PC-3 (cell line): ENCODE measurements at regions of chr19 and their contacts with region 1.

Region 1: DNA sequence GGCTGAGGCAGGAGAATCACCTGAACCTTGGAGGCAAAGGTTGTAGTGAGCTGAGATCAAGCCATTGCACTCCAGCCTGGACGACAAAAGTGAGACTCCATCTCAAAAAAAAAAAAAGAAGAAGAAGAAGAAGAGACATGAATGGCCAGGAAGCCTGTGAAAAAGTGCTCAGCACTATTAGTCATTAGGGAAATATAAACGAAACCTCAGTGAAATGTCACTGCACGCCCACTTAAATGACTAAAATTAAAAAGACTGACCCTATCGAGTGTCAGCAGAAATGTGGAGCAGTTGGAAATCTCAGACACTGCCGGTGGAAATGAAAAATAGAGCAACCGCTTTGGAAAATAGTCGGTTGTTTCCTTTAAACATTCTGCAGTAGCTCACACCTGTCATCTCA is 5.5 kb upstream of the TYROBP start:
- DNase-seq: peak; percentile 27
- ATAC-seq: no peak
- H3K4me3 ChIP-seq: no peak overlapping the region
- H3K27ac ChIP-seq: no peak overlapping the region
- H3K4me1 ChIP-seq: no peaks in the 10 kb centered on the region
- H3K27me3 ChIP-seq: no peaks in the 10 kb centered on the region
- CTCF ChIP-seq: no peak

Region 2: DNA sequence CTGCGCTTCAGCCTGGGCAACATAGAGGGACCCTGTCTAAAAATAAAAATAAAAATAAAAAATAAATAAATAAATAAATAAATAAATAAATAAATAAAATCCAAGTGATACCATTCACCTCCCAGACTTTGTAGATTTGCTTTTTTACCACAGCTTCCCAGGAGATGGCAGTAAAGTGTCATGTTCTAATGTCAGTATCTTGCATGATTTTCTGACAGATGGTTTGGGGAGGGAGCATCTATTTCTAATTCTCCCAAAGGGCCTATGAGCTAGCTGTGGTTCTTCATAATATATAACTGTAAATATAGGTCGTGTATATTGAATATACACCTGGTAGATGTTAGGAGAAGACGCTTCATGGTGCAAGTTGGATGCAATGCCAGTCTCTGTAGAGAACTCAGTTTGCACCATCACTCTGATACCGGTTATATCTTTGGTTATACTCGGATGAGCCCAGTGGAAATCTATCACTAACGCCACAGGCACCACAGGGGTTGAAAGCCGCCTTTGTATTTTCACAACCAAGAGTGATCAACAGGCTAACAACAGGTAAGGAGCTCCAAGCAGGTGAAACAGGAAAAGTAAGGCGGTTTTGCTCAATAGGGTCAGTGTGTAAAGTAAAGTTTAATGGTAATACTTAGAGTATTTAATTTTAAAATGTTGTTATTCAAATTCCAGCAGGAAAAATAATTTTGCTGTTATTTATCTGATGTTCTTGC is 31.3 kb before region 1 on chr19:
- CTCF ChIA-PET with region 1: no interaction called
- POLR2A ChIA-PET with region 1: no interaction called
- intact Hi-C with region 1: loop called (anchors 1 kb)
- DNase-seq: peak; percentile 71
- ATAC-seq: peak; percentile 49
- H3K4me3 ChIP-seq: no peak overlapping the region
- H3K27ac ChIP-seq: no peak overlapping the region
- H3K4me1 ChIP-seq: no peaks in the 10 kb centered on the region; the same call in 1 of the 2 replicates
- H3K27me3 ChIP-seq: no peaks in the 10 kb centered on the region
- CTCF ChIP-seq: peak; percentile 46; the same call in 1 of the 2 replicates